Right cardiac atrium (tissue), 5 donors: ENCODE measurements at regions of chr1 and their contacts with region 1.

Region 1: GRCh38 chr1:51296383-51297357 is 33.7 kb downstream of the TTC39A start:
- DNase-seq: peak; percentile 85 to 94 (median 93)
- ATAC-seq: peak; percentile 79 to 88
- H3K4me3 ChIP-seq: peak overlapping the region; percentile 34
- H3K27ac ChIP-seq: no peak overlapping the region
- H3K4me1 ChIP-seq: peaks cover 7% of the 10 kb centered on the region
- H3K27me3 ChIP-seq: no peaks in the 10 kb centered on the region

Region 2: GRCh38 chr1:51203121-51203873 is 93.4 kb before region 1 on chr1:
- intact Hi-C with region 1: loop called in 1 of 4 experiments (anchors 10 kb)
- DNase-seq: no peak
- ATAC-seq: no peak
- H3K4me3 ChIP-seq: no peak overlapping the region
- H3K27ac ChIP-seq: no peak overlapping the region
- H3K4me1 ChIP-seq: no peaks in the 10 kb centered on the region
- H3K27me3 ChIP-seq: no peaks in the 10 kb centered on the region

Region 3: DNA sequence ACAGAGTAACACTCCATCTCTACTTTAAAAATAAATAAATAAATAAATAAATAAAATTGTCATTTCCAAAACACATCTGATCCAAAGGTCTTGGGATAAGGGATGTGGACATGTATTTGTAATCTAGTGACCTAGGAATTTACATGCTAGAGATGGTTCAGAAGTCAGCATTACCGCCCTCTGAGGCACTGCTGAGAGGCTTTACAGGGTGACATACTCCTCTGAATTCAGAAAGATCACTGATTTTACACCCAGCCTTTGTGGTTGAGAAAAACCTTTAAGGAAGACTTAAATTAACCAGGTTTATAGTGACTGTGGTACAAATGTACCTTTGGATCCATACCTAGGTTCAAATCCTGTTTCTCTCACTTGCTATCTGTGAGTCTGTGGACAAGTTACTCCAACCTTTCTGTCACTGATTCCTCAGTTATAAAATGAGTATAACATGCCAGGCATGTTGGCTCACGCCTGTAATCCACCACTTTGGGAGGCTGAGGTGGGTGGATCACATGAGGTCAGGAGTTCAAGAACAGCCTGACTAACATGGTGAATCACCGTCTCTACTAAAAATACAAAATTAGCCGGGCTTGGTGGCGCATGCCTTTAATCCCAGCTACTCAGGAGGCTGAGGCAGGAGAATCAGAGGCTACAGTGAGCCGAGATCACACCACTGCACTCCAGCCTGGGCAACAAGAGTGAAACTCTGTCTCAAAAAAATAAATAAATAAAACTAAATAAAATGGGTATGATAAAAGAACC is 340.3 kb after region 1 on chr1:
- intact Hi-C with region 1: no loop called
- DNase-seq: peak in 1 of 3 donors; percentile 39
- ATAC-seq: peak; percentile 35 to 82
- H3K4me3 ChIP-seq: no peak overlapping the region
- H3K27ac ChIP-seq: no peak overlapping the region
- H3K4me1 ChIP-seq: peaks cover 7% of the 10 kb centered on the region
- H3K27me3 ChIP-seq: no peaks in the 10 kb centered on the region